ENCODE measurements at regions of chr2 and their contacts with region 1.

Region 1: DNA sequence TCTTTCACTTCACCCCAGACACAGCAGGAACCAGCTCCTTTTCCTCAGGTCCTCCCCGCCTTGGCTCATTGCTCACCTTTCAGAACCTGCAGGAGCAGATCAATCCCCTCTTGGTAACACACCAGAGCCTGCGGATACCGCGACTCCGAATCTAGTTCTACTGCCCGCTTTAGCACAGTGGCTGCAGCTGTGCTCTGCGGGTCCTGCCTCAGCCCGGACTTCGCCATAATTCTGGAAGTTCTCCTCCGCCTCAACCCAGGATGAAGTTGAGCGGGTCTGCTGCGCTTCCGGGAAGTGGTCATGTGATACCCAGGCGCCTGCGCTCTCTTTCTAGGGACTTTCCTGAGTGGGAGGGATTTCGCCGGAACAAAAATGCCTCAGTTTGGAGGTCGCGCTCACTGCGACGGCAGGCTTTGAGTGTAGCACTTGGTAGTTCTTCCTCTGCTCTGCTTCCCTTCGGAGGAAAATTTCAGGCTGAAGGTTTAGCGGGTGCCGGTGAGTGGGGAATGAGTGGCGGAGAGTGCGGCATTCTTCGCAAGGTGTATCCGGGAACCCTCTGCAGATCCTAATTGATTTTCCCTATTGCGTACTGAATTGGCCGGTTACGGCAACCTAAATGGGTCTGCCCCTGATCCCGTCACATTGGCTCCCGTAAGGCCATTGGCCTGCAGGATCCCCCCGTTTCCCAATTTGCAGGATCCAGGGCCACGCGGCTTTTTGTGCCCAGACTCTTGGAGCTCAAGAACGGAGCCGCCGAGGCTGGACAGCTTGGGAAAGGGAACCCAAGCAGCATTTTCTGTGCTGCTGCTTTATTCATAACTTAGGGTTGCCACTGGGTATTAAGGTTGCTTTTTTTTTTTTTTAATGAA is at the starts of genes MITD1 and MRPL30:
- DNase-seq: peak; percentile 95 to 96
- ATAC-seq: peak; percentile 97
- H3K4me3 ChIP-seq: peak within 1 kb of the TSS; percentile 96 to 100
- H3K27ac ChIP-seq: peak within 1 kb of the TSS in 1 of 2 donors; percentile 65
- H3K4me1 ChIP-seq: peaks cover 0 to 5% of the 10 kb centered on the region in 2 donors
- H3K27me3 ChIP-seq: no peaks in the 10 kb centered on the region
- total RNA-seq, gene MITD1: 20.2 to 28.0 TPM
- total RNA-seq, gene MRPL30: 17.4 to 19.8 TPM

Region 2: DNA sequence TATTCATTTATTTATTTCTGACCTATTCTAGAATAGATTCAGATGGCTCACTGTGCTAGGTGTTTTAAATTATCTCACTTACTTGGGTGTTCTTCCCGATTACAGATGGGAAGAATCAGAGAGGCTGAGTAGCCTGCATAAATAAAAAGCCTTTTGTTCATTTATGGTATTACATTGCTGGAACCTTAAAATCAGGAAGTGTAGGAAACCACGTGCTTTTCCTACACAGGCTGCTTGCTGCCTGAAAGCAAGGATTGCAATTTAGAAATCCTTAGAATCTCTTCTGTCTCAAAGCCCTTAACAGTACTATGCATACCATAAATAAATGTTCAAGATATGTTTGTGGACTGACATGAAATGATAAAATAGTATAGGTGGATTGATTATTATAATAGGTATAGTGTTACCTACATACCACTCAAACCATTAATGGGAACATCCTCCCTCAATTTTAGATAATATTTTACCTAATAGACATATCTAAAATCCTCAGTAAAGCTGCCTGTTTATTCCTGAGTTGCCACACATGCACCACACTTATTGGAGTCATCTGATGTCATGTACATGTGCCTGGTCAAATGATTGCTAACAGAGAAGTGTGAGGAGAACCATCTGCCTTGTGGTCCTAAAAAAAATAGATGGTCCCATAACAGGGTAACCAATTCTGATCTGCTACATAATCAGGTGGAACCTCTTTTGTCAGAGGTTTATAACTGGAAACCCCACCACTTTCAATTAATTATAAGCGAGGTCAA is 112.9 kb before region 1 on chr2:
- intact Hi-C with region 1: no loop called
- DNase-seq: no peak
- ATAC-seq: no peak
- H3K4me3 ChIP-seq: no peak overlapping the region
- H3K27ac ChIP-seq: no peak overlapping the region
- H3K4me1 ChIP-seq: no peaks in the 10 kb centered on the region
- H3K27me3 ChIP-seq: no peaks in the 10 kb centered on the region

Region 3: DNA sequence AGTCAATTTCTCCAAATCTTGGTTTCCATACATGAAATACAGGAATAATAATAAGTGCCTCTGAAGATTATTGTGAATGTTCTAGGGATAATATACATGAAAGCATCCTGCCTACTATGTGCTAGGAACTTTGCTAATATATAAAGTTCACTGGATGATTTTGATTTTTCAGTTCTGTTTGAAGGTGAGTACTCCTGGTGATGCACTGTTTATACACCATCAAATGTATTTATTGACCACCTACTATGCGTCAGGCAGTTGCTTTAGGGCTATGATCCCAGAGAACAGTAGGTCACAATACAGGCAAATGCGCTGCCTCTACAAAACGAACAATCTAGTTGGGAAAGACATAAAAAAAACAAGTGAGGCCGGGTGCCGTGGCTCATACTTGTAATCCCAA is 144.4 kb after region 1 on chr2:
- intact Hi-C with region 1: loop called in 1 of 2 experiments (anchors 10 kb)
- DNase-seq: no peak
- ATAC-seq: no peak
- H3K4me3 ChIP-seq: no peak overlapping the region
- H3K27ac ChIP-seq: no peak overlapping the region
- H3K4me1 ChIP-seq: no peaks in the 10 kb centered on the region
- H3K27me3 ChIP-seq: no peaks in the 10 kb centered on the region

Region 4: DNA sequence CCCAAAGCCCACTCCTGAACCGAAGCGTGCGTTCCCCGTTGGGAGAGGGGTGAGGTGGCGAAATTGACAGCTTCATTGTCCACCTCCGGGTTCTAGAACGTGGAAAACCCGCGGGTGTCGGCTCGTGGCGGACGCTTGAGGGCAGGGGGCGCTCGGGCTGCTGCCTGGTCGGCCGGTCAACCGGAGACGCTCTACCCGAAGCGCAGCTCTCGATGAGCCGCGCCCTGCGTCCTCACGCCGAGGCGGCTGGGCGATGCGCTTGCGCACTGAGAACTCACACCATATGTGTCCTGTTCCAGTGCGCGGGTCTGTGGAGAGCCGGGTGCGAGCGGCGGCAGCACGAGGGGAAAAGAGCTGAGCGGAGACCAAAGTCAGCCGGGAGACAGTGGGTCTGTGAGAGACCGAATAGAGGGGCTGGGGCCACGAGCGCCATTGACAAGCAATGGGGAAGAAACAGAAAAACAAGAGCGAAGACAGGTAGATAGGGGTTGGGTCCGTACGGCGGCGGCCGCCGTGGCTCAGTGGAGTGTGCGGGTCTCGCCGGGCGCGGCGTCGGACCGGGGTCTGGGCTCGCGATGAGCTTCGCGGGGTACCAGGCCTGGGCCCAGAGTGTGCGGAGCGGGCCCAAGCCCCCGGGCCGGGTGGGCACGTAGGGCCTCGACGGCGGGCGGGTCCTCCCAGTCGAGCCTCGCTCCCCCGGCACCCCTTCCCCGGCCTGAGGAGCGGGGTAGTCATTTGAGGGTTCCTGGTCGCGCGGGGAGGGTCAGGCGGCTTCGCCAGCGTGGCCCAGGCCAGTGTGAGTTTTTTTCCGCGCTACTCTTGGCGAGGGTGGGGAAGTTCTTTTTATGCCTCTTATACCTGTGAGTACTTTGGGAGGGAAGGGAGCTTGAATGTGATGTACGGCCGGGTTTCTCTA is 156.4 kb after region 1 on chr2 and contains the start of gene EIF5B:
- intact Hi-C with region 1: loop called in 1 of 2 experiments (anchors 5 kb)
- DNase-seq: peak; percentile 98 to 99
- ATAC-seq: peak; percentile 96
- H3K4me3 ChIP-seq: peak within 1 kb of the TSS; percentile 56 to 86
- H3K27ac ChIP-seq: peak within 1 kb of the TSS; percentile 47 to 49
- H3K4me1 ChIP-seq: no peaks in the 10 kb centered on the region
- H3K27me3 ChIP-seq: no peaks in the 10 kb centered on the region
- total RNA-seq, gene EIF5B: 42.3 to 57.9 TPM